Endothelial cell of umbilical vein (primary cell): ENCODE measurements at regions of chr1 and their contacts with region 1.

Region 1: GRCh38 chr1:180252638-180253536 is 22.8 kb downstream of the LHX4 start:
- DNase-seq: peak; percentile 57
- H3K4me3 ChIP-seq: no peak overlapping the region
- H3K27ac ChIP-seq: no peak overlapping the region
- H3K4me1 ChIP-seq: no peaks in the 10 kb centered on the region
- H3K27me3 ChIP-seq: no peaks in the 10 kb centered on the region
- CTCF ChIP-seq: peak; percentile 86 to 89
- POLR2A ChIP-seq: no peak

Region 2: DNA sequence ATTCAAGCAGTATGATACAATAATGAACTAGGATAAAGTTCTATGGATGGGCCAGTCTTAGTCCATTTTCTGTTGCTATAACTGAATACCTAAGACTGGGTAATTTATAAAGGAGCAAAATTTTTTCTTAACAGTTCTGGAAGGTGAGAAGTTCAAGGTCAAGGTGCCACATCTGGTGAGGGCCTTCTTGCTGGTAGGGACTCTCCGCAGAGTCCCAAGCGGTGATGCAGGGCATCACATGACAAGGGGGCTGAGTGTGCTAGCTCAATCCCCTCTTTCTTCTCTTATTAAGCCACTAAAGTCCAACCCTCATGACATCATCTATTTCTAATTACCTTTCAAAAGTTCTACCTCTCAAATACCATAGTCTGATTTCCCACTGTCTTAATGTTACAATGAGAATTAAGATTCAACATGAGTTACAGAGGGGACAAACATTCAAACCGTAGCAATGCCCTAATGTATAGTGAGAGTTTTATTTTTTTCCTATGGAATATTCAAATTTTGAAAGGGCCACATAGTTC is 190.4 kb before region 1 on chr1:
- CTCF ChIA-PET with region 1: no interaction called
- POLR2A ChIA-PET with region 1: no interaction called
- dilution Hi-C with region 1: no loop called
- intact Hi-C with region 1: no loop called
- DNase-seq: no peak
- H3K4me3 ChIP-seq: no peak overlapping the region
- H3K27ac ChIP-seq: no peak overlapping the region
- H3K4me1 ChIP-seq: no peaks in the 10 kb centered on the region
- H3K27me3 ChIP-seq: no peaks in the 10 kb centered on the region
- CTCF ChIP-seq: no peak
- POLR2A ChIP-seq: no peak

Region 3: GRCh38 chr1:180188091-180188506 is 64.8 kb before region 1 on chr1:
- CTCF ChIA-PET with region 1: interaction called, 16 read pairs
- POLR2A ChIA-PET with region 1: no interaction called
- dilution Hi-C with region 1: no loop called
- intact Hi-C with region 1: loop called (anchors 1 kb)
- DNase-seq: peak; percentile 44
- H3K4me3 ChIP-seq: no peak overlapping the region
- H3K27ac ChIP-seq: no peak overlapping the region
- H3K4me1 ChIP-seq: no peaks in the 10 kb centered on the region
- H3K27me3 ChIP-seq: no peaks in the 10 kb centered on the region
- CTCF ChIP-seq: peak; percentile 67 to 80
- POLR2A ChIP-seq: no peak

Region 4: DNA sequence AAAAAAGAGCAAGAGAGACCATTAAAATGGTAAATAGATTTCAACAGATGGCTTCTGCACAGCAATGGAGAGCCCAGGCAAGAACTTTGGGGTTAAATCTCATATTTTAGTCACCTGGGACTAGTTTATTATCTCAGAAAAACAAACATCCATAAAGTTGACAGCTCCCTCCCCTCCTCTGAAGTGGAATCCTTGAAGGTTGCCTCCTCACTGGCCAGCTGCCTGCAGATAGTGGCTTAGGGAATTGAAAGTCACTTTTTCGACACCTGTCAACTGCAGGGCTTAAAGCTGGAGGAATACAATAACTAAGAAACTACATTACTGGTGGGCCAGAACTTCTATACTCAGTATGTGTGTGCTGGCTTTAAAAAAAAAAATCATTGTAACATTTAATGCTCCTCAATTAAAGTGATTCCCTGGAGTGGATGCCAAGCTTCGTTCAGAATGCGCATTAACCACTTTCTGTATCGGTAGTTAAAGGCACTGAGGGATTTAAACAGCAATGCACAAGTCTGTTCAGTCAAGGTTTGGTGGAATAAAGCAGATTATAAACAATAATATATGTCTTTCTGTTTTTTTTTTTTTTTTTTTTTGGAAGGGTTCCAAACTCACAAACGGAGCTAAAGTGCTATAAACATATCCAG is 29.6 kb after region 1 on chr1:
- CTCF ChIA-PET with region 1: interaction called, 18 read pairs
- POLR2A ChIA-PET with region 1: no interaction called
- dilution Hi-C with region 1: no loop called
- intact Hi-C with region 1: no loop called
- DNase-seq: no peak
- H3K4me3 ChIP-seq: no peak overlapping the region
- H3K27ac ChIP-seq: no peak overlapping the region
- H3K4me1 ChIP-seq: peaks cover 14% of the 10 kb centered on the region
- H3K27me3 ChIP-seq: no peaks in the 10 kb centered on the region
- CTCF ChIP-seq: no peak
- POLR2A ChIP-seq: no peak

Region 5: DNA sequence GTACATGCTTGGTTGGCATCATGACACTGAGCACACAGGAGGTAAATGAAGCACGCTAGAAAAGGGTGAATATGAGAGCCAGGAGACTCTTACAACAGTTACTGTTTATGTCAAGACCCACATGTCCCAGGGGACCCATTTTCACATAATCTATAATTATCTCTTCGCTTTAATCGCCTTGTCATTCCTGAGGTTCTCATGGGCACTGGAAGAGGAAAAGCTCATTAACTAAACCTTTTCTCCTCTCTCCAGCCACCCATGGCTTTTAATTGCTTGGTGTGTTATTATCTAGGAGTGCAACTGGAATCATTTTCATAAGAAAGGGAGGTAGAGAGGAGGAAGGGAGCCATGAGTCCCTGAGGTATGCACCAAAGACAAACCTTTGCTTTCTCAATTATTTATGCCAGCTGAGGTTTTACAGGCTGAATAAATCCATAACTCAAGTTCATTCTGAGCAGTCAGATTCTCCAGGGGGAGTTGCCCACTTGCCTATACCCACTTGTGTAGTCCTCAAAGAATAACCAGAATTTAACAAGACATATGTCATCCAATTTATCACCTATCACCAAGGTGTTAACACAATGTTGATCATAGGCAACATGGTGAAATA is 172.1 kb after region 1 on chr1:
- CTCF ChIA-PET with region 1: interaction called, 12 read pairs
- POLR2A ChIA-PET with region 1: no interaction called
- dilution Hi-C with region 1: no loop called
- intact Hi-C with region 1: no loop called
- DNase-seq: no peak
- H3K4me3 ChIP-seq: no peak overlapping the region
- H3K27ac ChIP-seq: no peak overlapping the region
- H3K4me1 ChIP-seq: no peaks in the 10 kb centered on the region
- H3K27me3 ChIP-seq: no peaks in the 10 kb centered on the region
- CTCF ChIP-seq: no peak
- POLR2A ChIP-seq: no peak

Region 6: GRCh38 chr1:180482425-180483275 is 229.8 kb after region 1 on chr1:
- CTCF ChIA-PET with region 1: interaction called, 46 read pairs
- POLR2A ChIA-PET with region 1: no interaction called
- dilution Hi-C with region 1: no loop called
- intact Hi-C with region 1: loop called (anchors 1 kb)
- DNase-seq: peak; percentile 71
- H3K4me3 ChIP-seq: no peak overlapping the region
- H3K27ac ChIP-seq: no peak overlapping the region
- H3K4me1 ChIP-seq: peaks cover 5% of the 10 kb centered on the region
- H3K27me3 ChIP-seq: no peaks in the 10 kb centered on the region
- CTCF ChIP-seq: peak; percentile 50 to 60
- POLR2A ChIP-seq: no peak

Region 7: GRCh38 chr1:180805316-180805715 is 552.4 kb after region 1 on chr1:
- CTCF ChIA-PET with region 1: no interaction called
- POLR2A ChIA-PET with region 1: no interaction called
- dilution Hi-C with region 1: no loop called
- intact Hi-C with region 1: no loop called
- DNase-seq: no peak
- H3K4me3 ChIP-seq: no peak overlapping the region
- H3K27ac ChIP-seq: no peak overlapping the region
- H3K4me1 ChIP-seq: no peaks in the 10 kb centered on the region
- H3K27me3 ChIP-seq: no peaks in the 10 kb centered on the region
- CTCF ChIP-seq: no peak
- POLR2A ChIP-seq: no peak